ENCODE measurements at regions of chr2 and their contacts with region 1.

Region 1: GRCh38 chr2:200749631-200750322 is 61.9 kb upstream of the BZW1 start:
- DNase-seq: no peak
- H3K4me3 ChIP-seq: no peak overlapping the region
- H3K27ac ChIP-seq: no peak overlapping the region
- H3K4me1 ChIP-seq: peaks cover 17% of the 10 kb centered on the region
- H3K27me3 ChIP-seq: no peaks in the 10 kb centered on the region
- CTCF ChIP-seq: no peak

Region 2: DNA sequence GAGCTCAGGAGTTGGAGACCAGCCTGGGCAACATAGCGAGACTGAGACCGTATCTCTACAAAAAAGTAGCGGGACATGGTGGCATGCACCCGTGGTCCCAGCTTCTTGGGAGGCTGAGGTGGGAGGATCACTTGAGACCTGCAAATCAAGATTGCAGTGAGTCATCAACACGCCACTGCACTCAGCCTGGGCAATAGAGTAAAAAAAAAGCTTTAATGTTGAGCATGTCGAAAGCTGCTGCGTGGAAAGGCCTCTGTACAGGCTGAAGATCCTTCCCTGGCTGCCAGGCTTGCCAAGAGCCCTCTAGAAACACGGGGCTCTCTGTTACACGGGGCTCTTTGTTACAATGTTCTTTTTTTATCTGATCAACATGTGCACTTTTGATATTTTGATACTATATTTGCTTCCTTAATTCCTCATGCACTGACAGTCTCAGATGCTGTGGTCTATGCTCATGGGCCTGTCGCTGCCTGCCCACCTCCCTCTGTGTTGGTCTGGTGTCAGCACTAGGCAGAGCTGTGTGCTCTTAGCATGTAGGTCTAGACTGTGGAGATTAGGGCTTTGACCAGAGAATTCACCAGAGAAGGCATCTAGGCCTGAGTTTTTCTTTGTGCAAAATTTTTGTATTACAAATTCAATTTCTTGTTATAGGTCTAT is 96.0 kb after region 1 on chr2:
- CTCF ChIA-PET with region 1: no interaction called
- dilution Hi-C with region 1: loop called (anchors 5 kb)
- in situ Hi-C with region 1: no loop called
- intact Hi-C with region 1: no loop called
- DNase-seq: peak; percentile 31
- H3K4me3 ChIP-seq: no peak overlapping the region
- H3K27ac ChIP-seq: no peak overlapping the region
- H3K4me1 ChIP-seq: no peaks in the 10 kb centered on the region
- H3K27me3 ChIP-seq: no peaks in the 10 kb centered on the region
- CTCF ChIP-seq: no peak